Astrocyte of the cerebellum (primary cell): ENCODE measurements at regions of chr19 and their contacts with region 1.

Region 1: GRCh38 chr19:7595466-7596133 is at the start of gene CAMSAP3:
- DNase-seq: no peak
- H3K4me3 ChIP-seq: no peak within 1 kb of the TSS
- CTCF ChIP-seq: no peak

Region 2: GRCh38 chr19:7769171-7769570 is 173.6 kb after region 1 on chr19:
- in situ Hi-C with region 1: no loop called
- DNase-seq: no peak
- H3K4me3 ChIP-seq: no peak overlapping the region
- CTCF ChIP-seq: no peak

Region 3: GRCh38 chr19:7799640-7800355 is 204.2 kb after region 1 on chr19:
- in situ Hi-C with region 1: loop called (anchors 25 kb)
- DNase-seq: peak; percentile 54
- H3K4me3 ChIP-seq: peak overlapping the region; percentile 7
- CTCF ChIP-seq: peak; percentile 54